AG04449 (cell line): ENCODE measurements at regions of chr12 and their contacts with region 1.

Region 1: DNA sequence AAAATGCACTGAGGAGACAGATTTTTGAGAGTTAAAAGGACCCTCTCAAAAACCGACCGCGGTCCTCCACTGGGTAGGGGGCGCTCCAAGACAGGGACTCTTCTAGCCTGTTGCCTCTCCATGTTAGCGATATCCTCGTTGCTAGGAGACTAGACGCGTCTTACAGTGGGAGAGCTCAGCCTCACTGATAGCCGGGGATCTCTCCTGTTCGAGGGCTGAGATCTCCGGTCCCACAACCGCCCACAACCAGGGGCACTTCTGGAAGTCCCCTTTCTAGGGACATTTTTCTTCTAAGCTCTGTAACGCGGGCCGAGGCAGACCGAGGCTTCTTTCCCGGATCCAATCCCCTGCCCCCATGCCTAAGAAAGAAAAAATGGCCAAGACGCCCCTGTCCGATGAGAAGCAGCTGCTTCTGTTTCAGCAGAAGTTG is 21.3 kb downstream of the FKBP11 start:
- DNase-seq: no peak
- H3K4me3 ChIP-seq: peak overlapping the region; percentile 58
- CTCF ChIP-seq: peak; percentile 72

Region 2: DNA sequence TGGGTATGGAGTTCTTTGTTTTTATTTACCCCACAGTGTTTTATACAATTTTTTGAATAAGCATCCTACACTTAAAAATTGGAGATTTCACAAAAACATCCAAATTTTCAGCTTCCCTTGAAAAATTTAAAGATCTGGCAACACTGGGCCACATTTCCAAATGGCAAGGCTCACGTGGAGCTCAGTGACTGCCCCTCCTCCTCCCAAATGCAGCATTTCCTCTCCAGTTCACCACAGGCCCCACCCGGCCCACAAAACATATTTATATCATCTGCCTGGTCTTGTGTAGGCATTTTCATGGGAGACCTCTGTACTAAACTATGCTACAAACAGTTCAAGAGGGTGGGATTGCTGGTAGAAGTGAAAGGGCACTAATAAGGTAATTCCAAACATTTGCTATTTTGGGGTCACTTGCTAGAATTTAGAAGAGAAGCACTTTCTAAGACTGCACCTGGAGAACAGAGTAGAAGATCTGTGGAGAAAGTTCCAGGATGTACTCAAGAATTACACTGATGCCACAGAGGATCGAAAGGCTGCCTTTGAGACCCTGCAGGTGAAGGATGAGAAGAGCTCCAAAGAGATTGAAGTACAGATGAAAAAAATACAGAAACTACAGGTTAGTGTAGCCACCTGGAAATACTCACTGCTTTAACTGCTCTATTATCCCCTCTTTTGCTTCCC is 14.0 kb after region 1 on chr12:
- CTCF ChIA-PET with region 1: interaction called, 25 read pairs
- POLR2A ChIA-PET with region 1: no interaction called
- DNase-seq: no peak
- H3K4me3 ChIP-seq: no peak overlapping the region
- CTCF ChIP-seq: no peak

Region 3: DNA sequence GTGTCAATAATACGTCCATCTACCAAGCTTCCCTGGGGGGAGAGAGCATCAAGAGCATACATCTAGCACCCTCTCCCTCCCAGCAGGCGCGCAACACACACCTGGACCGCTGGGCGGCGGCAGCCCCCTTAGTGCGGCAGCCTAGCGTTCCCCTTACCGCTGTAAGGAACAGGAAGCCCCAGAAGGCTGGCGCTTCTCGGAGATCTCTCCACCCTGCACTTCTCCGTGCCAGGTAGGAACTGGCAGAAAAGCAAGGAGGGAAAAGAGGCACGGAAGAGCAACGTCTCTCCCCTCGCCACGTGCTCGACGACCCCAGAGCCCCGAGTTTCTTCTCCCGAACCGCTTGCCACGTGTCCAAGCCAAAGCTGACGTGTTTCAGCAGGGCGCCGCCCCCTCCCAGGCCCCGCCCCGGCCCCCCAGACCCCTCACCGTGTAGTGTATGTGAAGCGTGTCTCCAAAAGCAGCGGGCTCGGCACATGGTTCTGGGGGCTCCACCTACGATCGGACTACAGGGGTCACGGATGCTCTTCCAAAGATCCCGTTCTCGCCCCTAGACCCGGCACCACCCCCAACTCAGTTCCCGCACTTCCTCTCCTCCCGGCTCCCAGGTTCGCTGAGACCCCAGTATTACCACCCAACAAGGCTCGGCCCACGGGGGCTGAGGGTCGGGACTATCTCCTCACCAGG is 20.8 kb after region 1 on chr12:
- CTCF ChIA-PET with region 1: interaction called, 18 read pairs
- POLR2A ChIA-PET with region 1: no interaction called
- DNase-seq: no peak
- H3K4me3 ChIP-seq: peak overlapping the region; percentile 89
- CTCF ChIP-seq: peak; percentile 67

Region 4: DNA sequence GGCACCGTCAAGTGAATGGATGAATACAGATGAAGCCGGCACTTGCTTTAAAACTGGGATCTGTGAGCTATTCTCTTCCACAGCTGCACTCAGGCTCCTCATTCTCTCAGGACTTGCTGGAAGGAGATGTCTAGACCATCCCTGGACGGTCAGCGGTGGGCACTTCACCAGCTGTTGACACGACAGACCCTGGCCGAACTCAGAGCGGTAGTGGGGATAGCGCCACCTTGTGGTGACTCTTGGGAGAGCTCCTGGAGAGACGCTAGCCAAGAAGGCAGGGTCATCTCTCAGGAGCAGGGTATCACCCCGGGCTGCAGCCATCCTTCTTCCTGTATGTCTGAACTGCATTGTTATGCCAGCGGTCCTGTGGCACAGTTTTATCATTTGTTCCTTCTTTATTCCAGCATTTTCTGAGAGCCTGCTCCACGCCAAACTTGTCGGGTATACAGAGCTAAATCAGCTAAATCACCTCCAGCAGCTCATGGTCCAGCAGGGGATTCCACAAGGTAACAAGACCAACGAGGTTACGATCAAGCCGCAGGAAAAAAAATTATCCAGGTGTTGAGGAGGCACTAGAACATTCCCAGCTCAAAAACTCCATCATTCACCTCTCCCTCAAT is 84.1 kb after region 1 on chr12:
- CTCF ChIA-PET with region 1: interaction called, 15 read pairs
- POLR2A ChIA-PET with region 1: no interaction called
- DNase-seq: no peak
- H3K4me3 ChIP-seq: no peak overlapping the region
- CTCF ChIP-seq: peak; percentile 85